ENCODE measurements at regions of chr9 and their contacts with region 1.

Region 1: DNA sequence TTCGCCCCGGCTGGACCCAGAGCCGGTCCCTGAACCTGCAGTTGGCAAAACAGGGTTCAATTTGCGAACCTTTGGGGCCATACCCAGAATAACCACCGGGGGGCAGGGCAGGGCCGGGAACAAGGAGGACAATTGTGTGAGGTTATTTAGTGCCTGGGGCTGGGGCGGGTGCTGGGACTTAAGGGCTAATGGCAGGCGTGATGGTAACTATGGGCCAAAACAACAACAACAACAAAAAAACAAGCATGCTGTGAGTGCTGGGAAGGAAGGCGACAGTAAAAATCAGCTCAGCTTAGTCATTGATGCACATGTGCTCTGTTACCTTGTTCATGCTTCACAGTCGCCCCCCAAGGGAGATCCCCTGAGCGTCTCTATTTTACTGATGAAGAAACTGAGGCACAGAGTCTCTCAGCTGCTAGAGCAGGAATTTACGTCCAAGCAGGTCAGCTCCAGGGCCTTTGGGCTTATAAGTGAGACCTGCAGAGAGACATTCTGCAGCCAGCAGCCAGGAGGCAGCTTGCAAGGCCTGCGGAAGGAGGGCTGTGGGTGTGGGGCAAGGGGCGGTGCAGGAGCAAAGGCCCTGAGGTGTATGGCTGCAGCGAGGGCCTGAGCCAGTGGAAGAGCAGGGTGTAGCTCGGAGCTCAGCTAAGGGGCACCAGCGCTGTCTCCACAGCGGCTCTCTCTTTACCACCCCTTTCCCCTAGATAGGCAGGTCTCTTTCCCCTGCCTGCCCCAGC is 106.0 kb downstream of the PHF2 start:
- DNase-seq: peak; percentile 81
- CTCF ChIP-seq: peak; percentile 84

Region 2: GRCh38 chr9:93288341-93288740 is 394.1 kb before region 1 on chr9:
- in situ Hi-C with region 1: no loop called
- DNase-seq: peak; percentile 21
- CTCF ChIP-seq: no peak

Region 3: DNA sequence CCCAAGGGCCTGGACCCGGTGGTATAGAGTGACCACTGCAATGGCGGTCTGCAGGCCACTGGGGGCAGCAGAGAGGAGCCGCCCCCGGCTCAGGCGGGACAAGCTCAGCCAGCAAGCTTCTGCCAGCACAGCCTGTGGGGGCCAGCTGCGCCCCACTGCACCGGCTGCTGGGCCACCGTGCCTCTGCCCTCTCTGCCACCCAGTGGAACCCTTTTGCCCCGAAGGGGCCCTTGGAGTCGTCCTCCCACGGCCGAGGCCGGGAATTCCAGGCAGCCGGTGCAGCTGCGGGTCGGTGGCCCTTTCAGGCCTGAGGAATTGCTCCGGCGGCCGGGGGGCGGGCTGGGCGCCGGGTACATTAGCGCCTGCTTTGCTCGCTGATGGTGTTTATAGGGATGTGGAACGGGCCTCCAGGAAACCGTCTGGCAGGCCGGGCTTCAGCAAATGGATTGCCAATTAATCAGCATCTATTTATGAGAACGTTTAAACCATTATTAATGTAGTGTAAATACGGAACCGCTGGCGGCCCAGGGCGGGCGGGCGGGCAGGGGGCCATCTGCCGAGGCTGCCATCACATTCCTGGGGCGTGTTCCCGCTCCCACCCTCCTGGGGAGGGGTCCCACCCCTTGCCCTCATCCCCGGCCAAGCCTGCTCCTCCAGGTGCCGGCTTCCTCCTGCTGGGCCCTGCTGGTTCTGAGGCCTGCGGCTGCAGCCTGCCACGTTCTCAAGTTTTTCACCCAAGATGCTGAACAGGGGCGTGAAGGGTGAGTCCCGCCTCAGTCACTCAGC is 145.3 kb after region 1 on chr9:
- in situ Hi-C with region 1: no loop called
- DNase-seq: peak; percentile 77
- CTCF ChIP-seq: peak; percentile 55

Region 4: DNA sequence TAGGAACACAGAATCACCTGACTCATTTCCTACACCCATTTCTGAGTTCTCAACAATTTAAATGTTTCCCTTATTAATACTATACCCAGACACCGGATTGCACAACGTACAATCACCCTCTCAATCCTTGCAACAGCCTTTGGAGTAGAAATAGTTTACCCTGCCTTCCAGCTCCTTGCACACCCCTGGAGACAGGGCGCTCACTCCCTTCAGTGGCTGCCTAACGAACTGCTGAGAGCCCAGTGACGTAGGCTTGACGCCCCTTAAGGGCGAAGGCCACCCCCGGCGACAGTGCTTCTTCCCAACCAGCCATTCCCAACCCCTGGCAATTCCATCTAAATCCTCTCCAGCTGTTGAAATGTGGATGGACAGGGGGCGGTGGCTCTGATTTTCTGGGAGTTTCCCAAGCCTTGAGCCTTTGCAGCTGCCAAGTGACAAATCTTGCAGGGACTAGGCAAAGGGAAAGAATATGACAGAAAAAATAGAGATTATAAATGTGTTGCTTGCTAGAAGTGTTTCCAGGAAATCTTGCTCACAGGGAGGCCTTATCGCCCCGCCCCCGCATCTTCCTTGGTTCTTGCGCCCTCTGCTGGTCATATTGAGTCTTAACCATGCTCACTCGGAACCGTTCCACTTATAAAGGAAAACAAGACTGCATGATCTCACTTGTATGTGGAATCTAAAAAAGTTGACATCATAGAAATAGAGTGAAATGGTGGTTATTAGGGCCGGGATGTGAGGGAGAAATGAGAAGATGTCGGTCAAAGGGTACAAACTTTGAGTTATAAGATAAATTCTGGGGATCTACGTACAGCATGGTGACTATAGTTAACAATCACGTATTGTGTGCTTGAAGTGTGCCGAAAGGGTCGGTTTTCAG is 280.4 kb after region 1 on chr9:
- in situ Hi-C with region 1: loop called (anchors 25 kb)
- DNase-seq: peak; percentile 89
- CTCF ChIP-seq: peak; percentile 76